Posterior vena cava (tissue), 2 donors: ENCODE measurements at regions of chr21 and their contacts with region 1.

Region 1: DNA sequence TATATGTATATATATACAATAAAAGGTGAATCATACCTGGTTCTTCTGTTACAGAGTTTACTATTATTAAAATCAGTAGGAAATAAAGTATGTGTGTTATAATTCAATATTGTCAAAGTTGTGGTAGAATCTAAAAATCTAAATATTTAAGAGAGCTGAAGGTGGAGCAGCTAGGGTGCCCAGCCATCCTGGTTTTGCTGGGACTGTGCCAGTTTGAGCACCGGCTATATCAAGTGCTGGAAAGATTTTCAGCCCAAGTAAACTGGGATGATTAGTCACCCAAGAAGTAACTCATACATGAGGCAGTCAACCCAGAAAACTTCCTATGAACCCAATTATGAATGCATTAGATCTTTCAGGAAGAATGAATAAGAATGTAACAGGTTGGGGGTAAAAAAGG is 16.9 kb upstream of the KRTAP19-5 start:
- DNase-seq: no peak

Region 2: DNA sequence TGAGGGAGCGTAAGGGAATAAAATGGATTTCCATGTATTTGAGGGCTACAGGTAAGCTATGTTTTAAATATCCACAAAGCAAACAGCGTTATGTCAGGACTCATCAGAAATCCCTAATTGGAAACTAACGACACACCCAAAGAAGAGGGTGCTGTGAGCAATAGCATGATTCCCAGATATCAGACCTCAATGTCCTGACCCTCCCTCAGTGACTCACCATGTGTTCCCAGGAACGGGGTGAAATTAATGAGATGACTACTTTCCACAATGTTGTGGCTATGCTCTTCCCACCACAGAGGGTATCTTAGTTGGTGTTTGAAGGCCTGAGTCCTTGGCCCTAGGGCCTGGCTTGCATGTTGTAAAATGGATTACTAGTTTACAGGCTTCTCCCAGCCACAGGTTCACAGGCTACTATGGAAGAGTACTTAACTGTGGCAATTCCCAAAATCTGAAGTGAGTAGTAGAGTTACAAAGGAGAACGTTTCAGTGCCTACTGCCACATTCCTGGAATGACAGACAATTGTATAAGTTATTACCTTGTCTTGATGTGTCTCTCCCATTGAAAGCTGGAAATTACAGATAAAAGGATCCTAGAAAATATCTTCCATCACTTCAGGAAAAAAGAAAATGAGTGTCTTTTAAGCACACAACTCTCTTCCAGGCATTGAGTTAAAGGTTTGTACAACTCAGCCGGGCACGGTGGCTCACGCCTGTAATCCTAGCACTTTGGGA is 364.2 kb after region 1 on chr21:
- intact Hi-C with region 1: loop called in 1 of 2 experiments (anchors 5 kb)
- DNase-seq: no peak